ENCODE measurements at regions of chr12 and their contacts with region 1.

Region 1: GRCh38 chr12:53701518-53702260 is 25.6 kb downstream of the CALCOCO1 start:
- DNase-seq: peak; percentile 84
- H3K4me3 ChIP-seq: no peak overlapping the region
- H3K27ac ChIP-seq: no peak overlapping the region
- H3K4me1 ChIP-seq: no peaks in the 10 kb centered on the region
- H3K27me3 ChIP-seq: peaks cover 30% of the 10 kb centered on the region
- CTCF ChIP-seq: peak; percentile 89

Region 2: DNA sequence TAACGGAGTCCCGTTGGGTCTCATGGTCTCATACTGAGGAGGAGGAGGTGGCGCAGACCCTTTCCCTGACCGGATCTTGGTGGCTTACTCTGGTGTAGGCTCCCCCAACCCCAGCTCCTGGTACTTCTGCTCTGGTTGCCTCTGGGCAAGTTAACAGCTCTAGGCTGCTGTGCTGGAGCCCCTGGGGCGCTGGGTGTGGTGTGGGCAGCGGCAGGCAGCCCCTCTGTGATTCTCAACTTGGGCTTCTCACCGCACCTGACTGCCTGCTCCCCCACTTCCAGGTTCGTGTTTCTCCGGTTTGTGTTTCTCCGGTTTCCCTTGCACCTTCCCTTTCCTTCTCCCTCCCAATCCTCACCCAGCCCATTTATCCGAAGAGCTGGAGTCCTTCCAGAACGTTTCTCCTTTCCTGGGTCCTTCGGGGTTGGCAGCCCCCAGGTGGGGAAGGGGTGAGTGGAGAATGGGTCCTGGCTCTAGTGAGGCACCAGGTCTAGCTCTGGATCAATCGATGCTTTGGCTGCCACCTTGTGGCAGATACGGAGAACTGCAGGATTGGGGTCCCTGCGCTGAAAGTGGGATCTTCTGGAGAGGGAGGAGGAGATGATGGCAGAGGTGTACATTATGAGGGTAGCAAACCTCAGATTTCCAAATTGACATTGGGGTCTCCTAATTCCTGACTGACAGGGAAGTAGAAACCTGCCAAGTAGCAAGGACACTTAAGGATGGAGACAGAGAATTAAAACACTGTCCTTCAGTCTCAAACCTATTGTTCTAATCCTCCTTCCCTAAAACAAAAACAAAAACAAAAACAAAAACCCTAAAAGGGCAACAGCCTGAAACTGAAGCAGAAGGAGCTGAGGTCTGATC is 41.8 kb after region 1 on chr12:
- intact Hi-C with region 1: loop called (anchors 2 kb)
- DNase-seq: peak; percentile 63
- H3K4me3 ChIP-seq: no peak overlapping the region
- H3K27ac ChIP-seq: no peak overlapping the region
- H3K4me1 ChIP-seq: peaks cover 2% of the 10 kb centered on the region
- H3K27me3 ChIP-seq: peaks cover 48% of the 10 kb centered on the region
- CTCF ChIP-seq: peak; percentile 93

Region 3: DNA sequence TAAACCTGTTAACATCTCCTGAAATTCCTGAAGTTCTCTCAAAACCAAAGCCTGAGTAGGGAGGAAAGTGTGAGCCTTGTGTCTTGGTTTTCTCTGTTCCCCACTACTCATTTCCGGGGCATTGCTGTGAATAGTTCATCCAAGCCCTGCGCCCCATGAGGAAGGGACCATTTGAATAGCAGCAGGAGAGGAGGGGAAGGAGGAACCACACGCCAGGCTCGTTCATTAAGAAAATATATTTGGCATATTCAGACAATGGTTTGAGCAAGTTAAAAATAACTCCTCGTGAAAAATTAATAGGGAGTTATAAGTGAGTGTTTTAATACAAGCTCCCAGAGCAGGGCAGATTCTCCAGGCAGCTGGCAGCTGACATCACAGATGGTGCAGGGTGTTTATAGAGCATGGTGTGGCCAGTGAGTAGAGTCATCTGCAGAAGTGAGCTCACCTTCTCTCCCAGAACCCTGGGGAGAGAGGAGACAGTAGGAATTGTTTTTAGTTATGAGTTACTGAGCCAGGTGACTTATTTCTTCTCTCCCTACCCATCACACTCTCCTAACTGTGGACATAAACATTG is 79.6 kb after region 1 on chr12:
- intact Hi-C with region 1: no loop called
- DNase-seq: no peak
- H3K4me3 ChIP-seq: no peak overlapping the region
- H3K27ac ChIP-seq: no peak overlapping the region
- H3K4me1 ChIP-seq: no peaks in the 10 kb centered on the region
- H3K27me3 ChIP-seq: peaks cover 25% of the 10 kb centered on the region
- CTCF ChIP-seq: no peak

Measured in colonic mucosa (tissue), 4 donors.